Caco-2 (cell line): ENCODE measurements at regions of chr19 and their contacts with region 1.

Region 1: DNA sequence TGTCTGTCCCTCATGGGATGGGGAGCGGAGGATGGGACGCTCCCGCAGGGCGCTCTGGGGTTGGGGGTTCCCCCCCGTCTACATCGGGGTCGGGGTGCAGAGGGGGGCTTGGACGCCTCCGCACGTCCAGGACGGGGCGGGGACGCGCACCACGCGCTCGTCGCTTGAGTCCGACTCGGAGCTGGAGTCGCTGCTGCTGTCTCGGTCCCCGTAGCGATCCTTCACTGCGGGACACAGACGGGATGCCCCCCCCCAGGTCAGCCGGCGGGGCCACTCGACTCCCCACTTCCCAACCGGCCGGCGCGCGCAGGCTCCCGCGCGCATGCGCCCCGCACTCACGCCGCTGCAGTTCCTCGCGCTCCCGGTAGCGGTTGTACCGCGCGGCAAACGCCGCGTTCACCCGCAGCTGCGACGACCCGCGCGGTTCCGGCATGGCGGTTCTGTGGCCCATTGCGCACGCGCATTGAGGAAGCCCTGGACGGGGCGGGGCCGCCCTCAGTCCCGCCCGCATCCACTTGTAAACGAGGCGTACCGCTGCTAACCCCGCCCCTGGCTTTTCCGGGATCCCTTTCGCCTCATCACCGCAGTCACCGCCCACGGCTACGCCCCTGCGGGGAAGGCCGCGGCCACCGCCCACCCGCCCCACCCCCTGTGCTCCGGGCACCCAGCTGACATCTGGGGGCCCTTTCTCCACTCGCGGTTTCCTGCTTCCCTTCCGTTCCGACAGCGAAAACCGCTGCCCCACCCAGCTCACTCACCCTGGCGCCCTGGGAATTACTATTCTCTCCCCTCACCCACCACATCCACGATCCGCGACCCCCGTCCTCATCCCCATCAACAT is at the start of gene KRI1:
- DNase-seq: peak; percentile 97 to 98
- H3K4me3 ChIP-seq: peak within 1 kb of the TSS; percentile 93
- H3K4me3 Mint-ChIP-seq: peak within 1 kb of the TSS; percentile 96
- H3K27ac Mint-ChIP-seq: peak within 1 kb of the TSS; percentile 91
- H3K4me1 ChIP-seq: peaks cover 4% of the 10 kb centered on the region; the same call in 1 of the 2 replicates
- H3K4me1 Mint-ChIP-seq: peaks cover 11% of the 10 kb centered on the region
- H3K27me3 ChIP-seq: no peaks in the 10 kb centered on the region
- H3K27me3 Mint-ChIP-seq: no peaks in the 10 kb centered on the region
- CTCF ChIP-seq: peak; percentile 34
- total RNA-seq, gene KRI1: 27.0 and 27.5 TPM in 2 replicates

Region 2: GRCh38 chr19:10403137-10404021 is 162.4 kb before region 1 on chr19 and contains the start of gene CDC37:
- CTCF ChIA-PET with region 1: no interaction called
- POLR2A ChIA-PET with region 1: no interaction called
- intact Hi-C with region 1: loop called (anchors 2 kb)
- DNase-seq: peak; percentile 94 to 96
- H3K4me3 ChIP-seq: peak within 1 kb of the TSS; percentile 99
- H3K4me3 Mint-ChIP-seq: peak within 1 kb of the TSS; percentile 93
- H3K27ac Mint-ChIP-seq: peak within 1 kb of the TSS; percentile 97
- H3K4me1 ChIP-seq: no peaks in the 10 kb centered on the region
- H3K4me1 Mint-ChIP-seq: no peaks in the 10 kb centered on the region
- H3K27me3 ChIP-seq: no peaks in the 10 kb centered on the region
- H3K27me3 Mint-ChIP-seq: peaks cover 8% of the 10 kb centered on the region
- CTCF ChIP-seq: no peak
- total RNA-seq, gene CDC37: 154 and 164 TPM in 2 replicates

Region 3: GRCh38 chr19:10502524-10503001 is 63.2 kb before region 1 on chr19:
- CTCF ChIA-PET with region 1: no interaction called
- POLR2A ChIA-PET with region 1: no interaction called
- intact Hi-C with region 1: loop called (anchors 5 kb)
- DNase-seq: peak; percentile 95 to 96
- H3K4me3 ChIP-seq: peak overlapping the region; percentile 95
- H3K4me3 Mint-ChIP-seq: peak overlapping the region; percentile 84
- H3K27ac Mint-ChIP-seq: peak overlapping the region; percentile 79
- H3K4me1 ChIP-seq: peaks cover 7% of the 10 kb centered on the region
- H3K4me1 Mint-ChIP-seq: peaks cover 7% of the 10 kb centered on the region
- H3K27me3 ChIP-seq: no peaks in the 10 kb centered on the region
- H3K27me3 Mint-ChIP-seq: no peaks in the 10 kb centered on the region
- CTCF ChIP-seq: no peak

Region 4: GRCh38 chr19:10543420-10544241 is 22.2 kb before region 1 on chr19 and contains the start of gene ATG4D:
- CTCF ChIA-PET with region 1: interaction called, 6 read pairs
- POLR2A ChIA-PET with region 1: no interaction called
- intact Hi-C with region 1: loop called (anchors 1 kb)
- DNase-seq: peak; percentile 95 to 97
- H3K4me3 ChIP-seq: peak within 1 kb of the TSS; percentile 78
- H3K4me3 Mint-ChIP-seq: peak within 1 kb of the TSS; percentile 78
- H3K27ac Mint-ChIP-seq: peak within 1 kb of the TSS; percentile 67
- H3K4me1 ChIP-seq: peaks cover 3% of the 10 kb centered on the region; the same call in 1 of the 2 replicates
- H3K4me1 Mint-ChIP-seq: no peaks in the 10 kb centered on the region
- H3K27me3 ChIP-seq: no peaks in the 10 kb centered on the region
- H3K27me3 Mint-ChIP-seq: no peaks in the 10 kb centered on the region
- CTCF ChIP-seq: no peak
- total RNA-seq, gene ATG4D: 34.3 and 34.6 TPM in 2 replicates

Region 5: GRCh38 chr19:10554760-10555609 is 10.8 kb before region 1 on chr19:
- CTCF ChIA-PET with region 1: no interaction called
- POLR2A ChIA-PET with region 1: no interaction called
- intact Hi-C with region 1: loop called (anchors 1 kb)
- DNase-seq: no peak
- H3K4me3 ChIP-seq: no peak overlapping the region
- H3K4me3 Mint-ChIP-seq: no peak overlapping the region
- H3K27ac Mint-ChIP-seq: no peak overlapping the region
- H3K4me1 ChIP-seq: no peaks in the 10 kb centered on the region
- H3K4me1 Mint-ChIP-seq: no peaks in the 10 kb centered on the region
- H3K27me3 ChIP-seq: no peaks in the 10 kb centered on the region
- H3K27me3 Mint-ChIP-seq: no peaks in the 10 kb centered on the region
- CTCF ChIP-seq: peak in 1 of 2 experiments; percentile 24

Region 6: DNA sequence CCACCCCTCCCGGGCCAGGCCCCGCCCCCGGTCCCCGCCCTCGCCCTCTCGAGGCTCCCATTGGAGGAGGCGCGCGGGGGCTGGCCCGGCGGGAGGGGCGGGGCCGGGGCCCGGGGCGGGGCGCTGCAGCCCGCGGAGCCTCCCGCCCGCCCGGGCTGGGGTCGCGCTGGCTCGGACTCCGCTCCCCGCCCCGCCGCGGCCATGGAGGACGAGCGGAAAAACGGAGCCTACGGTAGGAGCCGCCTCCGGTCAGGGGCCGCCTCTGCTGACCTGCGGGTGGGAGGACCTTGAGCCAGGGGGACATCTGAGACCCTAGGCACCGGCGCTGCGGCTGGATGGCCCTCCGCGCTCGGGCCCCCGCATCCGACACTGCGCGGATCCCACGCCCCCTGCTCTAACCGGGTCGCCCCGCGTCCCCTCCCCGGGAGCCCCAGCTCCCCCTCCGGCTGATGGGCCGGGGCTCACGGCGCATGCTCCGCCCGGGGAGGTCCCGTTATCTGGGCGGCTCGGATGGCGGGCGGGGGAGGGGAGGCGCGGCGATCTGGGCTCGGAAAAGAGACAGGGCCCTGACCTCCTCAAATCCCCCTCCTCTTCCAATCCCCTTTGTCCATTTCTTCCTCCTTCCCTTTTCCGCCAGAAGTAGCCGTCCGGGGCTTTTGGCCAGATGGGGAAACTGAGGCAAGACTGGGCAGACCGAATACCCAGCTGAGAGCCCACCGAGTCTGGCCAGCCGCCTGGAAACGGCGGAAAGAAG is 36.7 kb after region 1 on chr19:
- CTCF ChIA-PET with region 1: no interaction called
- POLR2A ChIA-PET with region 1: no interaction called
- intact Hi-C with region 1: no loop called
- DNase-seq: peak; percentile 71 to 82
- H3K4me3 ChIP-seq: peak overlapping the region; percentile 72
- H3K4me3 Mint-ChIP-seq: peak overlapping the region; percentile 67
- H3K27ac Mint-ChIP-seq: no peak overlapping the region
- H3K4me1 ChIP-seq: no peaks in the 10 kb centered on the region
- H3K4me1 Mint-ChIP-seq: peaks cover 11% of the 10 kb centered on the region
- H3K27me3 ChIP-seq: no peaks in the 10 kb centered on the region
- H3K27me3 Mint-ChIP-seq: peaks cover 3% of the 10 kb centered on the region
- CTCF ChIP-seq: no peak

Region 7: GRCh38 chr19:10653715-10654492 is 88.1 kb after region 1 on chr19 and contains the start of gene ILF3:
- CTCF ChIA-PET with region 1: no interaction called
- POLR2A ChIA-PET with region 1: no interaction called
- intact Hi-C with region 1: loop called (anchors 5 kb)
- DNase-seq: peak; percentile 98 to 99
- H3K4me3 ChIP-seq: peak within 1 kb of the TSS; percentile 55
- H3K4me3 Mint-ChIP-seq: peak within 1 kb of the TSS; percentile 87
- H3K27ac Mint-ChIP-seq: peak within 1 kb of the TSS; percentile 98
- H3K4me1 ChIP-seq: peaks cover 5% of the 10 kb centered on the region
- H3K4me1 Mint-ChIP-seq: peaks cover 6% of the 10 kb centered on the region
- H3K27me3 ChIP-seq: no peaks in the 10 kb centered on the region
- H3K27me3 Mint-ChIP-seq: no peaks in the 10 kb centered on the region
- CTCF ChIP-seq: no peak
- total RNA-seq, gene ILF3: 399 and 401 TPM in 2 replicates

Region 8: DNA sequence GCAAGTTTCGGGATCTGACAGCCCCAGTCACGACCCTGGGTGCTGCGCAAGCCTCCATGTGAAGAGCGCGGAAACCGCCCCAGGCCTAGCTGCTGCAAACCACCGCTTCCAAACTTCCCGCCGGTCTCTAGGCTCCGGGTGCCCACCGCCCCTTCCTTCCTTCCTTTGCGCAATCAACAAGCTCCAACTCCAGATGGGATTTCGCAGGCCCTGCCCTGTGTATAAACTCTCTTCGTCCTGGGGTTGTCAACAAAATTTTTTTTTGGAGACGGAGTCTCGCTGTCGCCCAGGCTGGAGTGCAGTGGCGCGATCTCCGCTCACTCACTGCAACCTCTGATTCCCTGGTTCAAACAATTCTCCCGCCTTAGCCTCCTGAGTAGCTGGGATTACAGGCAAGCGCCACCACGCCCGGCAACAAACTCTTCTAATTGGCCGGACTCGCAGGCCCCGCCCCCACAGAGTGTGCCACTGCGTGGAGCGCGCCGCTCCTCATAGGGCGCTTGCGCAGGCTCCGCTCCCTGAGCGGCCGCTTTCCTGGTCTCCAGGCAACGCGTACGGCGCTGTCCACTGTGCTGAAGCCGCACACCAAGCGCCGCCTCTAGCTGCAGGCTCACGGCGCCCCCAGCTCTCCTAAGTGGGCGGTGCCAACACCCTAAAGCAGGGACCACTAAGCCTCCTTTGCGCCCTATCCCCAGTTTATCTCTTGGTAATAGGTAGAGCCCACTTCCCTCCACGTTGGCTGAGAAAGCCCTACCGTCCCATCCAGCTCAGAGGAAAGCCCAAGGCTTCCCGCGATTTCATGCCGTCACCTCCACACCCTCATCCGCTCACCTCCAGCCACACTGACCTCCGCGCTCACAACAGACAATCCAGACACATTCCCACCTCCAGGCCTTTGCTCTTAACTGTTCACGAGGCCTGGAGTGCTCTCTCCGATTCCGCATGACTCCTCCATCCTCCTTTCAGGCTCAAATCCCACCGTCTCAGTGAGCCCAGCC is 129.9 kb after region 1 on chr19:
- CTCF ChIA-PET with region 1: no interaction called
- POLR2A ChIA-PET with region 1: no interaction called
- intact Hi-C with region 1: loop called (anchors 5 kb)
- DNase-seq: peak; percentile 95
- H3K4me3 ChIP-seq: peak overlapping the region; percentile 19
- H3K4me3 Mint-ChIP-seq: peak overlapping the region; percentile 64
- H3K27ac Mint-ChIP-seq: peak overlapping the region; percentile 49
- H3K4me1 ChIP-seq: peaks cover 6% of the 10 kb centered on the region; the same call in 1 of the 2 replicates
- H3K4me1 Mint-ChIP-seq: peaks cover 6% of the 10 kb centered on the region
- H3K27me3 ChIP-seq: no peaks in the 10 kb centered on the region
- H3K27me3 Mint-ChIP-seq: no peaks in the 10 kb centered on the region
- CTCF ChIP-seq: no peak

Region 9: DNA sequence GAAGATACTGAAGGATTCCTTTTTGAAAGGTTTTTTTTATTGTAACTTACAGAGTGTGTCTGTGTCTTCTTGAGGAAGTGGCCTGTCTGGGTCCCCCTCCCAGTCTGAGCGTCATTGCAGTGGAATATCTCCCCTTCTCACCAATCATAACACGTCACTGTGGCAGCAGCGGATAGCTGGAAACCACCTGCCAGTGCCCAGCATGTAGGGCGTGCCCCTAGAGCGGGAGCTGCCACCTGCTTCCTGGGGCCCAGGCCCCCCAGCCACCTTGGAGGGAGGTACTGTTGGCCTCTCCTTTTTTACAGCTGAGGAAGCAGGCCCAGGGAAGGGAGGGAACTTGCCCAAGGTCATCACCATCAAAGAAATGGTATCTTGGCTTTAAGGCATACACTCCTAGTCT is 147.5 kb after region 1 on chr19:
- CTCF ChIA-PET with region 1: no interaction called
- POLR2A ChIA-PET with region 1: no interaction called
- intact Hi-C with region 1: no loop called
- DNase-seq: no peak
- H3K4me3 ChIP-seq: no peak overlapping the region
- H3K4me3 Mint-ChIP-seq: no peak overlapping the region
- H3K27ac Mint-ChIP-seq: no peak overlapping the region
- H3K4me1 ChIP-seq: no peaks in the 10 kb centered on the region
- H3K4me1 Mint-ChIP-seq: no peaks in the 10 kb centered on the region
- H3K27me3 ChIP-seq: no peaks in the 10 kb centered on the region
- H3K27me3 Mint-ChIP-seq: no peaks in the 10 kb centered on the region
- CTCF ChIP-seq: no peak

Region 10: GRCh38 chr19:11050323-11051114 is 484.7 kb after region 1 on chr19:
- CTCF ChIA-PET with region 1: no interaction called
- POLR2A ChIA-PET with region 1: no interaction called
- intact Hi-C with region 1: no loop called
- DNase-seq: no peak
- H3K4me3 ChIP-seq: no peak overlapping the region
- H3K4me3 Mint-ChIP-seq: no peak overlapping the region
- H3K27ac Mint-ChIP-seq: no peak overlapping the region
- H3K4me1 ChIP-seq: no peaks in the 10 kb centered on the region
- H3K4me1 Mint-ChIP-seq: no peaks in the 10 kb centered on the region
- H3K27me3 ChIP-seq: no peaks in the 10 kb centered on the region
- H3K27me3 Mint-ChIP-seq: no peaks in the 10 kb centered on the region
- CTCF ChIP-seq: no peak